ENCODE measurements at regions of chr3 and their contacts with region 1.

Region 1: GRCh38 chr3:72134989-72135451 is 350.1 kb upstream of the PROK2 start:
- DNase-seq: peak; percentile 25
- H3K4me3 Mint-ChIP-seq: peak overlapping the region; percentile 59
- H3K27ac Mint-ChIP-seq: peak overlapping the region; percentile 85
- H3K4me1 Mint-ChIP-seq: peaks cover 47% of the 10 kb centered on the region
- H3K27me3 Mint-ChIP-seq: no peaks in the 10 kb centered on the region

Region 2: DNA sequence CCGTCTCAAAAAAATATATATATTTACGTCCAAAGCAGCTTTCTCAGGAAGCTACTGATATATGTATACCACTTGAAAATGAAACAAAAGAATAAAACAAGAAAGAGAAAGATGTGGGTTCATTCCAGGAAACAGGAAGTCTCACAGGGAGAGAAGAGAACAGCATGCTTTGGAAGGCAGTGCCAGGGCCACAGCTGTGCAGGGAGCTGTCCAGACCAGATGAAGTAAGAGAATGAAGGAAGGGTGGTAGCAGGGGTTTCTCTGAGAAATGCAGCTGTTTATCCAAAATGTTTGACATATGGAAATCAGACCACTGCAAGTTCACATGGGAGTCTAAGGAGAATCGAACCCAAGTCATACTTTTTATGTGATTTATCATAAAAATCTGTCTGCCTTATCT is 390.3 kb before region 1 on chr3:
- CTCF ChIA-PET with region 1: no interaction called
- POLR2A ChIA-PET with region 1: no interaction called
- intact Hi-C with region 1: no loop called
- DNase-seq: no peak
- H3K4me3 Mint-ChIP-seq: no peak overlapping the region
- H3K27ac Mint-ChIP-seq: no peak overlapping the region
- H3K4me1 Mint-ChIP-seq: no peaks in the 10 kb centered on the region
- H3K27me3 Mint-ChIP-seq: no peaks in the 10 kb centered on the region

Region 3: DNA sequence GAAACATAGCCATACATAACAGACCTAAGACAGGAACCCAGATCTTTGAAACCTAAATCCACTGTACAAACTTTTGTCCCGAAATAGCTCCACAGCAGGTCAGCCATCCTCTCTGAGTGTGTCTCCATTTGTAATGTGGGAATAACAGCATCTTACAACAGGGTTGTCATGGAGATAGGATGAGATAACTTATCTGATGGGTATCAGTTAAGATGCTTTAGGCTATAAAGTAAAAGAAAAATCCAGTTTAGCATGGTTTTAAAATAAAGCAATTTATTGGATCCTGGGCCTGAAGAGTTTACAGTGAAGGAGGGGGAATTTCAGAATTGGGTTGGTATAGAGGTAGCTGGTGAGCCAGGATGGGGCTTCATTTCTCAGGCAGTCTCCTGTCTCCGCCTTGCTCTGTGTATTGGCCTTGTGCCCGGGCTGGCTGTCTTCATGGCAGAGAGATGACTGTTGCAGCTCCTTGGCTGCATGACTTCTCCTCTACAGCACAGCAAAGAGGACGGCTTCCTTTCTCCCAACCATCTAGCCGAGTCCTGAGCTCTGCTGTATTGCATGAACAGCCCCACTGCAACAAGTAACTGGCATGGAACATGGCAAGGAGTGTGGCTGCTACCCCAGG is 218.2 kb before region 1 on chr3:
- CTCF ChIA-PET with region 1: no interaction called
- POLR2A ChIA-PET with region 1: no interaction called
- intact Hi-C with region 1: no loop called
- DNase-seq: no peak
- H3K4me3 Mint-ChIP-seq: no peak overlapping the region
- H3K27ac Mint-ChIP-seq: no peak overlapping the region
- H3K4me1 Mint-ChIP-seq: no peaks in the 10 kb centered on the region
- H3K27me3 Mint-ChIP-seq: no peaks in the 10 kb centered on the region

Region 4: GRCh38 chr3:71955240-71956068 is 179.6 kb before region 1 on chr3:
- CTCF ChIA-PET with region 1: no interaction called
- POLR2A ChIA-PET with region 1: no interaction called
- intact Hi-C with region 1: loop called (anchors 2 kb)
- DNase-seq: peak; percentile 75
- H3K4me3 Mint-ChIP-seq: no peak overlapping the region
- H3K27ac Mint-ChIP-seq: peak overlapping the region; percentile 61
- H3K4me1 Mint-ChIP-seq: peaks cover 30% of the 10 kb centered on the region
- H3K27me3 Mint-ChIP-seq: no peaks in the 10 kb centered on the region

Region 5: GRCh38 chr3:71984843-71985613 is 150.0 kb before region 1 on chr3:
- CTCF ChIA-PET with region 1: no interaction called
- POLR2A ChIA-PET with region 1: no interaction called
- intact Hi-C with region 1: loop called (anchors 1 kb)
- DNase-seq: peak; percentile 70
- H3K4me3 Mint-ChIP-seq: peak overlapping the region; percentile 13
- H3K27ac Mint-ChIP-seq: peak overlapping the region; percentile 83
- H3K4me1 Mint-ChIP-seq: peaks cover 42% of the 10 kb centered on the region
- H3K27me3 Mint-ChIP-seq: peaks cover 9% of the 10 kb centered on the region

Region 6: GRCh38 chr3:72082186-72082715 is 52.8 kb before region 1 on chr3:
- CTCF ChIA-PET with region 1: no interaction called
- POLR2A ChIA-PET with region 1: no interaction called
- intact Hi-C with region 1: no loop called
- DNase-seq: no peak
- H3K4me3 Mint-ChIP-seq: no peak overlapping the region
- H3K27ac Mint-ChIP-seq: no peak overlapping the region
- H3K4me1 Mint-ChIP-seq: peaks cover 14% of the 10 kb centered on the region
- H3K27me3 Mint-ChIP-seq: peaks cover 2% of the 10 kb centered on the region

Region 7: DNA sequence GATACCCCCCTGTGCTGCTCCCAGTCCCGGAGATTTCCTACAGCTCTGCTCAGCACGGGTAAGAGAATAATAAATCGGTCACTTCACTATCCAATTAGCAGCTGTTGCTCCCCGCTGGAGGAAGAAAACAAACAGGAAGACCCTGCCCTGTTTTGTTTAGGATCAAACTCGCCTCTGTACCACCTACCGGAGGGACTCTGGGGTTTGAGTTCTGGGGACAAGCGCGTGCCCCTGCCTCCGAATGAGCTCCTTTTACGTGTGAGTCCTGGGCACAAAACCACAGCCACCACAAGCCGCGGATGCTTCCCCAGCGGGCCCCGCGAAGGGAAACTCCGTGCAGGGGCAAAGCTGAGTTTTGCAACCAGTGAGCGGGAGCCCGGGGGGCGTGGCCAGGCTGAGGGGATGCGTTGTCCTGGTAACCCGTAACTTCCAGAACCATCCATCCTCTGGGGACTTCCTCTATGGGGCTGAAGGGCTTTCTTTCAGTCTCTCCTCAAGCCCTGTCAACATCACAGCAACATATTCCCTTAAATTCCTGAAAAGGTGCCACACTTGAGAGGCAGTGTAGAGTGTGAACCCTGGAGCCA is 34.3 kb before region 1 on chr3:
- CTCF ChIA-PET with region 1: interaction called, 4 read pairs
- POLR2A ChIA-PET with region 1: interaction called, 6 read pairs
- intact Hi-C with region 1: loop called (anchors 1 kb)
- DNase-seq: peak; percentile 97
- H3K4me3 Mint-ChIP-seq: peak overlapping the region; percentile 78
- H3K27ac Mint-ChIP-seq: peak overlapping the region; percentile 70
- H3K4me1 Mint-ChIP-seq: peaks cover 22% of the 10 kb centered on the region
- H3K27me3 Mint-ChIP-seq: peaks cover 3% of the 10 kb centered on the region

Region 8: GRCh38 chr3:72339116-72340030 is 204.4 kb after region 1 on chr3:
- CTCF ChIA-PET with region 1: no interaction called
- POLR2A ChIA-PET with region 1: no interaction called
- intact Hi-C with region 1: loop called (anchors 2 kb)
- DNase-seq: no peak
- H3K4me3 Mint-ChIP-seq: no peak overlapping the region
- H3K27ac Mint-ChIP-seq: no peak overlapping the region
- H3K4me1 Mint-ChIP-seq: peaks cover 27% of the 10 kb centered on the region
- H3K27me3 Mint-ChIP-seq: no peaks in the 10 kb centered on the region

Region 9: GRCh38 chr3:72629191-72629631 is 494.2 kb after region 1 on chr3:
- CTCF ChIA-PET with region 1: no interaction called
- POLR2A ChIA-PET with region 1: no interaction called
- intact Hi-C with region 1: loop called (anchors 1 kb)
- DNase-seq: no peak
- H3K4me3 Mint-ChIP-seq: peak overlapping the region; percentile 4
- H3K27ac Mint-ChIP-seq: peak overlapping the region; percentile 74
- H3K4me1 Mint-ChIP-seq: peaks cover 60% of the 10 kb centered on the region
- H3K27me3 Mint-ChIP-seq: no peaks in the 10 kb centered on the region